ENCODE measurements at regions of chr15 and their contacts with region 1.

Region 1: DNA sequence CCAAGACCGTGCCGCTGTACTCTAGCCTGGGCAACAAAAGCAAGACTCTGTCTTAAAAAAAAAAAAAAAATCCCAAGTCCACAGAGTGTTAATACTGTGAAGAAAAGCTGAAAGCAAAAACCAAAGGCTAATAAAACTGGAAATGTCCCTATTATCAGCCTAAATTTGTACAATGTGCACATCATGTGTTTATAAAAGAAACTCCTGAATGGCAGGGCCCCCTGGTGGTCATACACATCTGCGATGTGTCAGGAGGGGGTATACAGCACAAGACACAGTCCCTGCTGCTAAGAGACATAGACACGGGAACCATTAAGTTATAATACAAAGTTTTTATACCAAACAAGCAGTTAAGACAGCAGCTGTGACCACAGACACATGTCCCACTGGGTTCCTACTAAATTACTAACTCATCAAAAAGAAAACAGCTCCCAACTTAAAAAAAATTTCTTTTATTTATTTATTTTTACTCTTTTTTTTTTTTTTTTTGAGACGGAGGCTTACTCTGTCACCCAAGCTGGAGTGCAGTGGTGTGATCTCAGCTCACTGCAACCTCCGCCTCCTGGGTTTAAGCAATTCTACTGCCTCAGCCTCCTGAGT is 31.0 kb downstream of the IDH2 start:
- DNase-seq: peak; percentile 74 to 90
- ATAC-seq: peak; percentile 93 to 99 (median 98)
- H3K4me3 ChIP-seq: no peak overlapping the region
- H3K4me3 Mint-ChIP-seq: no peak overlapping the region
- H3K27ac ChIP-seq: no peak overlapping the region
- H3K27ac Mint-ChIP-seq: peak overlapping the region in 1 of 2 donors; percentile 27
- H3K4me1 ChIP-seq: peaks cover 3% of the 10 kb centered on the region
- H3K4me1 Mint-ChIP-seq: peaks cover 4 to 15% of the 10 kb centered on the region in 2 donors
- H3K27me3 ChIP-seq: no peaks in the 10 kb centered on the region
- H3K27me3 Mint-ChIP-seq: no peaks in the 10 kb centered on the region
- CTCF ChIP-seq: peak; percentile 83

Region 2: GRCh38 chr15:89740137-89740536 is 331.2 kb before region 1 on chr15:
- intact Hi-C with region 1: loop called (anchors 5 kb)
- DNase-seq: peak; percentile 41 to 84
- ATAC-seq: peak; percentile 78 to 93 (median 87)
- H3K4me3 ChIP-seq: no peak overlapping the region
- H3K4me3 Mint-ChIP-seq: no peak overlapping the region
- H3K27ac ChIP-seq: no peak overlapping the region
- H3K27ac Mint-ChIP-seq: no peak overlapping the region
- H3K4me1 ChIP-seq: peaks cover 3% of the 10 kb centered on the region
- H3K4me1 Mint-ChIP-seq: peaks cover 0 to 4% of the 10 kb centered on the region in 2 donors
- H3K27me3 ChIP-seq: no peaks in the 10 kb centered on the region
- H3K27me3 Mint-ChIP-seq: peaks cover 7 to 9% of the 10 kb centered on the region in 2 donors
- CTCF ChIP-seq: peak; percentile 95

Region 3: GRCh38 chr15:89760303-89761008 is 310.9 kb before region 1 on chr15:
- intact Hi-C with region 1: loop called (anchors 5 kb)
- DNase-seq: peak; percentile 73 to 76
- ATAC-seq: peak; percentile 85 to 94 (median 91)
- H3K4me3 ChIP-seq: no peak overlapping the region
- H3K4me3 Mint-ChIP-seq: no peak overlapping the region
- H3K27ac ChIP-seq: no peak overlapping the region
- H3K27ac Mint-ChIP-seq: no peak overlapping the region
- H3K4me1 ChIP-seq: no peaks in the 10 kb centered on the region
- H3K4me1 Mint-ChIP-seq: peaks cover 0 to 4% of the 10 kb centered on the region in 2 donors
- H3K27me3 ChIP-seq: no peaks in the 10 kb centered on the region
- H3K27me3 Mint-ChIP-seq: peaks cover 0 to 7% of the 10 kb centered on the region in 2 donors
- CTCF ChIP-seq: peak; percentile 86

Region 4: DNA sequence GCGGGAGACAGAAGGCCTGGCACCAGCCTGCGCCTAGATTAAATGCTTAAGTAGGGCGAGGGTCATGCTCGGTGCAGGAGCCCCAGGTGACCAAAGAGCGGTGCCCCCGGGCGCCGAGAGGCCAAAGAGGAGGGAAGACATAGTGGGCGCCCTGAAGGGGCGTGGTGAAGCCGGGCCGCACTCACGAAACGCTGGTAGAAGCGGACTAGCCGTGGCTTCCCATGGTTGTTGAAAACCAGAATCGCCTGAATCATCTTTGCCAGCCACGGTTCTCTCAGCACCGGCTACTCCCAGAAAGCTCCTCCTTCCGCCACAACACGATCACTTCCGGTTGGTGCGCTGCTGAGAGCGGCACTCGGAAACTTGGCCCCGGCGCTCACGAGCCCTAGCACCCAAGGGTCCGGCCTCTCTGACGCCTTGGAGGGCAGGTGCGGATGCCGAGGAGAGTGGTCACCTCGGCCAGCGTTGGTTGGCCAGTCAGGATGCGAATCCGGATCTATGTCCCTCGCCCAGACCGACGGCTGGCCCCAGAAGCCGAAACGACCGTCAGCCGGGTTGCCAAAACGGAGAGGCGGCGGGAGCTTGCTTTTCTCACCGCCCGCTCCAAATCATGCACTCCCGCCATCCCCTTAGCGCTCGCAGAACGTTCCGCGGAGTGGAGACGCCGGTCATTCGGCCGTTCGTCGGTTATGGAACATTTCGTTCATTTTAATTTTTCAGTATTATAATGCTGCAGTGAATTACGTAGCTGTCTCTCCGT is 177.4 kb before region 1 on chr15 and contains the start of gene AP3S2:
- intact Hi-C with region 1: loop called (anchors 2 kb)
- DNase-seq: peak; percentile 86 to 94
- ATAC-seq: peak; percentile 95 to 98 (median 97)
- H3K4me3 ChIP-seq: peak within 1 kb of the TSS; percentile 84
- H3K4me3 Mint-ChIP-seq: peak within 1 kb of the TSS; percentile 99
- H3K27ac ChIP-seq: peak within 1 kb of the TSS; percentile 86
- H3K27ac Mint-ChIP-seq: peak within 1 kb of the TSS; percentile 94 to 98
- H3K4me1 ChIP-seq: peaks cover 15% of the 10 kb centered on the region
- H3K4me1 Mint-ChIP-seq: peaks cover 34 to 35% of the 10 kb centered on the region in 2 donors
- H3K27me3 ChIP-seq: no peaks in the 10 kb centered on the region
- H3K27me3 Mint-ChIP-seq: no peaks in the 10 kb centered on the region
- CTCF ChIP-seq: no peak
- total RNA-seq, gene AP3S2: 28.4 to 38.2 (median 36.8) TPM

Region 5: DNA sequence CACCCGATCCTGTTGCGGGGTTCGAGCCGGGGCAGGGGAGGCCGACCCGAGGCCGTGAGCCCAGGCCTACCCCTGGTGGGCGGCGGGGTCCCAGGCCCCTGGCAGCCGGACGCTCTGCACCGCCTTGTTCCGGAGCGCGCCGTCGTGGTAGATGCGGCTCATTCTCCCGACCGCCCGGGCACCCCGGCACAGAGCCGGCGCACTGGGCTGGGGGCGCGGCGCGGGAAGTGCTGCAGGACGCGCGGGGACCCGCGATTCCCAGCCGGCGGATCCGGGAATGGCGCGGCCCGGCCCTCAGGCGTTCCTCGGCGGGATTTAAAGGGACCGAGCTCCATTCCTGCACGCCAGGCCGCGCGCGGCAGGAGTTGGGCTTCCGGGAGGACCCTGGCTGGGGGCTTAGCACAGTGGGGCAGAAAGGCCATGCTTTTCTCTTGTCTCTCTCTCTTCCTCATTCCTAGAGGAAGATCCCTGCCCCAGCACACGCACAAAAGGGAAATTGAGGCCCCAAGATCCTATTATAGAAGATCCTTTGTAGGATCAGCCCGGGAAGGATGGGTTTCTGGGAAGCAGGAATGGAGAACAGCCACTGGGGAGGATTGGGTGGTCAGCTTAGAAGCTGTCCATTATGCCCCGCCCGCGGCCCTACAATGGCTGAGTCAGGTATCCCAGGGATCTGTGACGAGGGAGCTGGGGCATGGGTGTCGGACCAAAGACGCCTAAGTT is 158.5 kb before region 1 on chr15 and contains the start of gene ARPIN:
- intact Hi-C with region 1: loop called (anchors 5 kb)
- DNase-seq: peak in 1 of 2 donors; percentile 35
- ATAC-seq: peak; percentile 55 to 81 (median 80)
- H3K4me3 ChIP-seq: peak within 1 kb of the TSS; percentile 27
- H3K4me3 Mint-ChIP-seq: peak within 1 kb of the TSS; percentile 70
- H3K27ac ChIP-seq: no peak within 1 kb of the TSS
- H3K27ac Mint-ChIP-seq: peak within 1 kb of the TSS in 1 of 2 donors; percentile 84
- H3K4me1 ChIP-seq: peaks cover 10% of the 10 kb centered on the region
- H3K4me1 Mint-ChIP-seq: peaks cover 0 to 12% of the 10 kb centered on the region in 2 donors
- H3K27me3 ChIP-seq: peaks cover 13% of the 10 kb centered on the region
- H3K27me3 Mint-ChIP-seq: peaks cover 10 to 14% of the 10 kb centered on the region in 2 donors
- CTCF ChIP-seq: no peak
- total RNA-seq, gene ARPIN: 0.23 to 5.5 (median 0.38) TPM

Region 6: DNA sequence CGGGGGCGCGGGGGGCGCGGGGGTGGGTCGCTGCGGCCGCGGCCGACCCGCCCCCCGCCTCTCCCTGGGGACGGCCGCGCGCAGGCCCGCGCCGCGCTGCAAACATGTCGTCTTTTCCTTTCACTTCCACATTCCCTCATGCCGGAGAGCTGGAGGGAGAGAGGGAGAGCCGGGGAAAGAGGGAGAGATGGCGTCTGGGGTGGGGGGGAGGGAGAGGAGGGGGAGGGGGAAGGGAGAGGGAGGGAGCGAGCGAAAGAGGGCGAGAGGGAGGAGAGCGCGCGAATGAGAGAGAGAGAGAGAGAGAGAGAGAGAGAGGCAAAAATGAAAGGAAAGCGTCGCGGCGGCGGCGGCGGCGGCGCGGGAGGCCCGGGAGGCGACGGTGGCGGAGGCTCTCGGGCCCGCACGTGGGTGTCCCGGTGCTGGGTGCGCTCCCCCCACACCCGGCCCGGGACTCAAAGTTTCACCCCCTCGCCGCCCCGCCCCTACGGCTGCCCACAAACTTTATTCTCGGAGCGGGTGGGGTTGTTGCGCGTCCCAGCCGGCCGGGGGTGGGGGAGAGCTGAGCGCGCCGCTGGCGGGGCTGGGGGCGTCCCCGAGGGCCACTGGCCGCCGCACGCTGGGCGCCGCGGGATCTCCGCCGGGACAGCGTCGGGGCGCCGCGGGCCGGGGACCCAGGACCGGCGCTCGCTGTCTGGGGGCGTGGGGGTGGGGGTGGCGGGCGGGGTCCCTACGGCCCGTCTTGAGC is 69.5 kb before region 1 on chr15:
- intact Hi-C with region 1: loop called (anchors 1 kb)
- DNase-seq: peak; percentile 61 to 77
- ATAC-seq: peak; percentile 59 to 70 (median 66)
- H3K4me3 ChIP-seq: peak overlapping the region; percentile 51
- H3K4me3 Mint-ChIP-seq: peak overlapping the region; percentile 96
- H3K27ac ChIP-seq: peak overlapping the region; percentile 70
- H3K27ac Mint-ChIP-seq: peak overlapping the region; percentile 94
- H3K4me1 ChIP-seq: peaks cover 46% of the 10 kb centered on the region
- H3K4me1 Mint-ChIP-seq: peaks cover 60 to 64% of the 10 kb centered on the region in 2 donors
- H3K27me3 ChIP-seq: no peaks in the 10 kb centered on the region
- H3K27me3 Mint-ChIP-seq: peaks cover 0 to 6% of the 10 kb centered on the region in 2 donors
- CTCF ChIP-seq: no peak

Region 7: GRCh38 chr15:90086868-90087268 is 15.6 kb after region 1 on chr15:
- intact Hi-C with region 1: no loop called
- DNase-seq: peak; percentile 44 to 70
- ATAC-seq: peak; percentile 76 to 92 (median 83)
- H3K4me3 ChIP-seq: no peak overlapping the region
- H3K4me3 Mint-ChIP-seq: no peak overlapping the region
- H3K27ac ChIP-seq: no peak overlapping the region
- H3K27ac Mint-ChIP-seq: peak overlapping the region; percentile 58 to 75
- H3K4me1 ChIP-seq: peaks cover 5% of the 10 kb centered on the region
- H3K4me1 Mint-ChIP-seq: peaks cover 8 to 15% of the 10 kb centered on the region in 2 donors
- H3K27me3 ChIP-seq: no peaks in the 10 kb centered on the region
- H3K27me3 Mint-ChIP-seq: no peaks in the 10 kb centered on the region
- CTCF ChIP-seq: peak; percentile 69

Region 8: GRCh38 chr15:90362936-90363212 is 291.6 kb after region 1 on chr15:
- intact Hi-C with region 1: no loop called
- DNase-seq: no peak
- ATAC-seq: peak in 1 of 3 donors; percentile 46
- H3K4me3 ChIP-seq: no peak overlapping the region
- H3K4me3 Mint-ChIP-seq: peak overlapping the region; percentile 9
- H3K27ac ChIP-seq: no peak overlapping the region
- H3K27ac Mint-ChIP-seq: peak overlapping the region; percentile 64 to 78
- H3K4me1 ChIP-seq: peaks cover 13% of the 10 kb centered on the region
- H3K4me1 Mint-ChIP-seq: peaks cover 24 to 36% of the 10 kb centered on the region in 2 donors
- H3K27me3 ChIP-seq: no peaks in the 10 kb centered on the region
- H3K27me3 Mint-ChIP-seq: no peaks in the 10 kb centered on the region
- CTCF ChIP-seq: no peak